ENCODE measurements at regions of chr16 and their contacts with region 1.

Region 1: DNA sequence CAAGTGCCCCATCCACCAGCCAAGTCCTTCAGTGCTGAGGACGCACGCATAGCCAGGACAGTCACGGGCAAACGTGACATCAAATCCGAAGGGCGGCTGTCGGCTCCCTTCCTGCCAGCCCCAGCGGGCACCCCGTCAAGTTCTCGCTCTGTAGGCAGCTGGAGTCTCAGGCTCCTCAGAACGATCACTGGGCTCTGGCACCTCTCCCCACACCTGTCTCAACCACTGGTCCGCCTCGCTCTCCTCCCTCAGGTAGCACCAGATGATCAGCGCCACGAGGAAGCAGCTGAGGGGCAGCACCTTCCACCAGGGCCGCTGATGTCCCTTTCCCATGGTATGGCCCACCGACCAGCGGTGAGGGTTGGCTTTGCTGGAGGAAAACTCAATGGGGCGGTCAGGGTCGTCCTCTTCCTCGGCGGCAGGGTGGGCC is 421 bp downstream of the UQCC4 start:
- DNase-seq: no peak
- ATAC-seq: no peak
- H3K4me3 Mint-ChIP-seq: peak overlapping the region; percentile 85
- H3K27ac Mint-ChIP-seq: peak overlapping the region; percentile 98
- H3K4me1 Mint-ChIP-seq: peaks cover 25% of the 10 kb centered on the region
- H3K27me3 Mint-ChIP-seq: no peaks in the 10 kb centered on the region
- CTCF ChIP-seq: no peak

Region 2: GRCh38 chr16:1308977-1309885 is 110.9 kb before region 1 on chr16 and contains the start of gene UBE2I:
- CTCF ChIA-PET with region 1: no interaction called
- POLR2A ChIA-PET with region 1: interaction called, 12 read pairs
- intact Hi-C with region 1: loop called (anchors 1 kb)
- DNase-seq: peak; percentile 98
- ATAC-seq: peak; percentile 69
- H3K4me3 Mint-ChIP-seq: peak within 1 kb of the TSS; percentile 98
- H3K27ac Mint-ChIP-seq: peak within 1 kb of the TSS; percentile 100
- H3K4me1 Mint-ChIP-seq: peaks cover 67% of the 10 kb centered on the region
- H3K27me3 Mint-ChIP-seq: no peaks in the 10 kb centered on the region
- CTCF ChIP-seq: no peak
- total RNA-seq, gene UBE2I: 220 and 240 TPM in 2 replicates

Region 3: GRCh38 chr16:1378804-1379303 is 41.3 kb before region 1 on chr16:
- CTCF ChIA-PET with region 1: interaction called, 3 read pairs
- POLR2A ChIA-PET with region 1: interaction called, 19 read pairs
- intact Hi-C with region 1: no loop called
- DNase-seq: no peak
- ATAC-seq: peak; percentile 77
- H3K4me3 Mint-ChIP-seq: peak overlapping the region; percentile 80
- H3K27ac Mint-ChIP-seq: peak overlapping the region; percentile 78
- H3K4me1 Mint-ChIP-seq: peaks cover 14% of the 10 kb centered on the region
- H3K27me3 Mint-ChIP-seq: no peaks in the 10 kb centered on the region
- CTCF ChIP-seq: no peak

Region 4: GRCh38 chr16:1458336-1458976 is 38.3 kb after region 1 on chr16:
- CTCF ChIA-PET with region 1: no interaction called
- POLR2A ChIA-PET with region 1: interaction called, 39 read pairs
- intact Hi-C with region 1: loop called (anchors 1 kb)
- DNase-seq: no peak
- ATAC-seq: peak; percentile 72
- H3K4me3 Mint-ChIP-seq: peak overlapping the region; percentile 76
- H3K27ac Mint-ChIP-seq: peak overlapping the region; percentile 99
- H3K4me1 Mint-ChIP-seq: peaks cover 26% of the 10 kb centered on the region
- H3K27me3 Mint-ChIP-seq: no peaks in the 10 kb centered on the region
- CTCF ChIP-seq: no peak

Region 5: DNA sequence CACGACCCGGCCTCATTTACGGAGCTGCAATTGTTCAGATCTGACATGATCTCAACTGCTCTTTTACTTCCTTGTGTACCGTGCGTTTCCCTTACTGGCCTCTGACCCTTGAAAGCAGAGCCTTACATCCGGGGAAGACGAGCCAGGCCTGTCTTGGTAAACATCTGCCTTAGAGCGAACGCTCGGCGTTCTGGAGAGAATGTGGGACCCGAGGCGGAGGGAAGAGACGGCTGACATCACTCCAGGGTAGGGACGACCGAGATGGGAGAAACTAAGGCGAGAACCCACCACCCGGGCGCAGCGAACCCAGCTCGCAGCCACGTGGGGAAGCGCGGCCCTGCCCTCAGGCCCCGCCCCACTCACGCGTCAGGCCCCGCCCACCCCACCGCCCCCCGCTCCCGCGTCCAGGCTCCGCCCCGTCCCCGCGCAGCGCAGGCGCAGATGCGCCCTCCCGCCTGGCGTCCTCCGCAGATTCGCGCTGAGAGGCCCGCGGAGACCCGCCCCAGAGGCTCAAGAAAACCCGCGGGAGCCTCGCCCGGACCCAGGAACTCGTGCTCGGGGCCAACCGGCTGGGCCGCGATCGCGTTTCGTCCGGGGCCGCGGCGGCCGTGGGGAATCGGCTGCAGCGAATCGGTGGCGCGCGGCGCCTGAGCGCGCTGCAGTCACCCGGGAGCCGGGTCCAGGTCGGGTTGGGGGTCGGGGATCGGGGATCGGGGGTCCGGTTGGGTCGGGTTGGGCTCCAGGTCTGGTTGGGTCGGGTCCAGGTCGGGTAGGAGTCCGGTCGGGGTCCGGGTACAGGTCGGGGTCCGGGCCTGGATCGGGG is 73.0 kb after region 1 on chr16 and contains the start of gene TELO2:
- CTCF ChIA-PET with region 1: no interaction called
- POLR2A ChIA-PET with region 1: interaction called, 39 read pairs
- intact Hi-C with region 1: loop called (anchors 1 kb)
- DNase-seq: peak; percentile 86
- ATAC-seq: peak; percentile 92
- H3K4me3 Mint-ChIP-seq: peak within 1 kb of the TSS; percentile 97
- H3K27ac Mint-ChIP-seq: peak within 1 kb of the TSS; percentile 100
- H3K4me1 Mint-ChIP-seq: peaks cover 18% of the 10 kb centered on the region
- H3K27me3 Mint-ChIP-seq: no peaks in the 10 kb centered on the region
- CTCF ChIP-seq: no peak
- total RNA-seq, gene TELO2: 72.9 and 78.8 TPM in 2 replicates

Region 6: DNA sequence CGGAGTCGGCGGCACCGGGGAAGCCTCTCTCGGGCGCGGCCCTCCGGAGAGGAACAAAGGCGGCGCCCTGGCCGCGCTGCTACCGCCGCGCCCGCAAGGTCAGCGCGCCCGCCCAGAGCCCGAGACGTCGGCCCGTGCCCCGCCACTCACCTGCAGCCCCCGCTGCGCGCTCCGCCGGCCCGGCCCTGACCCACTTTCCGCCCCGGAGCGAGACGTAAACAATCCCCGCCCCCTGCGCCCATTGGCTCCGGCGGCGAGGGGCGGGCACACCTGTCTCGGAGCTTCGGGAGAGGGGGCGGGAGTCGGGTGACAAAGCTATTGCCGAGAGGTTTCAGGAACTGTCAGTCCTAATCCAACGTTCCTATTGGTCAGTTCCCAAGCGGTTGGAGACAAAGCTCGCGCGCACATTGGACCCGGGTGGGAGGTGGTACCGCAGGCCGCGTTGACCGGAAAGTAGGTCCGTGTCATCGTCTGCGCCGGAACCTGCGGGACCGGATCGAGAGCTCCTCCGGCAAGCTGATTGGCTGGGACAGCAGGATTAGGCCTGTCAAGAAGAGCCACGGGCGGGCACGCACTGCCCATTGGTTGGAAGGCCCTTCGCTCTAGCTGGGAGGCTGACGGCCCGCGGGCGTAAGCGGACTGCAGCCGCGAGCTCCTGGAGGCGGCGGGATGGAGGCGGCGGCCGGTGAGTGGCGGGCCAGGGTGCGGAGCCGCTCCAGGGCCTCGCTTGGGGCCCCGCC is 362.4 kb after region 1 on chr16 and contains the starts of genes NUBP2 and SPSB3:
- CTCF ChIA-PET with region 1: no interaction called
- POLR2A ChIA-PET with region 1: interaction called, 19 read pairs
- intact Hi-C with region 1: loop called (anchors 2 kb)
- DNase-seq: peak; percentile 91
- ATAC-seq: peak; percentile 88
- H3K4me3 Mint-ChIP-seq: peak within 1 kb of the TSS; percentile 89
- H3K27ac Mint-ChIP-seq: peak within 1 kb of the TSS; percentile 87
- H3K4me1 Mint-ChIP-seq: peaks cover 24% of the 10 kb centered on the region
- H3K27me3 Mint-ChIP-seq: no peaks in the 10 kb centered on the region
- CTCF ChIP-seq: no peak
- total RNA-seq, gene NUBP2: 53.7 and 54.2 TPM in 2 replicates
- total RNA-seq, gene SPSB3: 36.4 and 40.3 TPM in 2 replicates